ENCODE measurements at regions of chr1 and their contacts with region 1.

Region 1: GRCh38 chr1:88061492-88062177 is 622.4 kb upstream of the PKN2 start:
- DNase-seq: no peak
- ATAC-seq: peak; percentile 60
- H3K4me3 Mint-ChIP-seq: no peak overlapping the region
- H3K27ac Mint-ChIP-seq: no peak overlapping the region
- H3K4me1 Mint-ChIP-seq: no peaks in the 10 kb centered on the region
- H3K27me3 Mint-ChIP-seq: no peaks in the 10 kb centered on the region
- CTCF ChIP-seq: no peak

Region 2: GRCh38 chr1:87501738-87502137 is 559.9 kb before region 1 on chr1:
- CTCF ChIA-PET with region 1: no interaction called
- POLR2A ChIA-PET with region 1: no interaction called
- intact Hi-C with region 1: loop called (anchors 10 kb)
- DNase-seq: no peak
- ATAC-seq: no peak
- H3K4me3 Mint-ChIP-seq: no peak overlapping the region
- H3K27ac Mint-ChIP-seq: no peak overlapping the region
- H3K4me1 Mint-ChIP-seq: peaks cover 8% of the 10 kb centered on the region
- H3K27me3 Mint-ChIP-seq: no peaks in the 10 kb centered on the region
- CTCF ChIP-seq: no peak

Measured in activated B cell treated with CpG ODN at 0.5 μM for 24 hours (primary cell).